ENCODE measurements at regions of chr4 and their contacts with region 1.

Region 1: GRCh38 chr4:80184053-80184790 is 13.1 kb upstream of the PRDM8 start:
- DNase-seq: no peak
- H3K4me3 ChIP-seq: peak overlapping the region; percentile 83
- H3K27me3 ChIP-seq: no peaks in the 10 kb centered on the region; the same call in 1 of the 2 replicates
- CTCF ChIP-seq: peak; percentile 94

Region 2: GRCh38 chr4:80125252-80126177 is 58.7 kb before region 1 on chr4:
- CTCF ChIA-PET with region 1: interaction called, 8 read pairs
- POLR2A ChIA-PET with region 1: interaction called, 20 read pairs
- DNase-seq: no peak
- H3K4me3 ChIP-seq: no peak overlapping the region
- H3K27me3 ChIP-seq: no peaks in the 10 kb centered on the region
- CTCF ChIP-seq: peak; percentile 64

Region 3: DNA sequence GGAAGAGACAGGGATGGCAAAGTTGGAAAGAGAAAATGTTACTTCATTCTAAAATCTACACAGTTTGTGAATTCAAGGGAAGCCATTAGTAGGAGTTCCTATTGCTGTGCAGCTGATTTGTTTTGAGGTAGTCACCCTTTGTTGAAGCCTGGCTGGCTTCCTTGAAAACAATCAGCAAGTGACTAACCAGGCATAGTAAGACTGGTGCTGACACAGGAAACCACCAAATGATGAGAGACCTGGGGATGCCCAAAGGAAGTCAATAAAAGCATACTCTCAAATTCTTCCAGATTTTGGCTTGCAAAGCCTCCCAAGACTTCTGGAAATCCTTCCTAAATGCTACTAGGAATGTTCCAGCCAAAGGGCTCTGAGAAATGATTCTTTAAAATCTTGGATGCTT is 10.8 kb before region 1 on chr4:
- CTCF ChIA-PET with region 1: interaction called, 14 read pairs
- POLR2A ChIA-PET with region 1: interaction called, 3 read pairs
- DNase-seq: no peak
- H3K4me3 ChIP-seq: no peak overlapping the region
- H3K27me3 ChIP-seq: no peaks in the 10 kb centered on the region
- CTCF ChIP-seq: no peak

Region 4: GRCh38 chr4:80215449-80216052 is 31.3 kb after region 1 on chr4:
- CTCF ChIA-PET with region 1: interaction called, 11 read pairs
- POLR2A ChIA-PET with region 1: no interaction called
- DNase-seq: no peak
- H3K4me3 ChIP-seq: no peak overlapping the region
- H3K27me3 ChIP-seq: no peaks in the 10 kb centered on the region
- CTCF ChIP-seq: peak; percentile 57

Region 5: GRCh38 chr4:80361329-80361900 is 177.2 kb after region 1 on chr4:
- CTCF ChIA-PET with region 1: no interaction called
- POLR2A ChIA-PET with region 1: no interaction called
- DNase-seq: no peak
- H3K4me3 ChIP-seq: no peak overlapping the region
- H3K27me3 ChIP-seq: no peaks in the 10 kb centered on the region
- CTCF ChIP-seq: 0 out of 2 replicates have a peak, but pooled peaks have one; percentile 13

Measured in BJ (cell line).